Calu3 (cell line): ENCODE measurements at regions of chr17 and their contacts with region 1.

Region 1: GRCh38 chr17:39927101-39927928 is at the starts of genes LRRC3C and ORMDL3:
- DNase-seq: no peak
- H3K4me3 Mint-ChIP-seq: peak within 1 kb of the TSS; percentile 74
- H3K27ac Mint-ChIP-seq: peak within 1 kb of the TSS; percentile 66
- H3K4me1 Mint-ChIP-seq: peaks cover 60% of the 10 kb centered on the region
- H3K27me3 Mint-ChIP-seq: no peaks in the 10 kb centered on the region
- CTCF ChIP-seq: no peak
- total RNA-seq, gene LRRC3C: not detected in 2 replicates
- total RNA-seq, gene ORMDL3: 1,738 and 1,968 TPM in 2 replicates

Region 2: DNA sequence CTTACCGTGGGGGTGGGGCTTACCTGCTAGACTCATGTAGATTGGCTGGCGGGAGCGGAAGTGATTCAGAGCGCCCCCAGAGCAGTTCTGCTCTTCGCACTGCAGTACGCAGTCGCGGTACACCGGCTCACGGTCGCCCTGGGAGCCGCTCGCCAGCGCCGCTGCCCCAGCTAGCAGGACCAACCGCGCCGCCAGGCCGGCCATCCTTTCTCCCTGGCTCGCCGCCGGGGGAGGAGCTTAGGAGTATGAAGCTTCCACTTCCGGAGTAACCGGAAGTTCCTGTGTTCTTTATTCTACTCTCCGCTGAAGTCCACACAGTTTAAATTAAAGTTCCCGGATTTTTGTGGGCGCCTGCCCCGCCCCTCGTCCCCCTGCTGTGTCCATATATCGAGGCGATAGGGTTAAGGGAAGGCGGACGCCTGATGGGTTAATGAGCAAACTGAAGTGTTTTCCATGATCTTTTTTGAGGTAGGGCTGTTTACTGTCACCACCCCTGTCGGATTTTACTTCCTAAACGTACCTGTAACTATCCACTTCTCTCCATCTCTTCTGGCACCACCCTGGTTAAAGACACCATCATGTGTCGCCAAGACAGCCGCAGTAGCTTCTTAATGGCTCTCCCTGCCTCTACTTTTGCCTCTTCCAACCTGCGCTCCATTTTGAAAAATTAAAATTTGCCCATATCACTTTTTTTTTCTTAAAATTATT is 239.3 kb before region 1 on chr17 and contains the start of gene PGAP3:
- CTCF ChIA-PET with region 1: interaction called, 8,195 read pairs
- intact Hi-C with region 1: loop called (anchors 1 kb)
- DNase-seq: peak; percentile 100
- H3K4me3 Mint-ChIP-seq: peak within 1 kb of the TSS; percentile 64
- H3K27ac Mint-ChIP-seq: peak within 1 kb of the TSS; percentile 63
- H3K4me1 Mint-ChIP-seq: peaks cover 27% of the 10 kb centered on the region
- H3K27me3 Mint-ChIP-seq: no peaks in the 10 kb centered on the region
- CTCF ChIP-seq: no peak
- total RNA-seq, gene PGAP3: 1,186 and 1,276 TPM in 2 replicates

Region 3: GRCh38 chr17:39763046-39763820 is 164.1 kb before region 1 on chr17:
- CTCF ChIA-PET with region 1: interaction called, 32 read pairs
- intact Hi-C with region 1: no loop called
- DNase-seq: no peak
- H3K4me3 Mint-ChIP-seq: no peak overlapping the region
- H3K27ac Mint-ChIP-seq: no peak overlapping the region
- H3K4me1 Mint-ChIP-seq: peaks cover 12% of the 10 kb centered on the region
- H3K27me3 Mint-ChIP-seq: peaks cover 26% of the 10 kb centered on the region
- CTCF ChIP-seq: no peak

Region 4: GRCh38 chr17:39939588-39940419 is 12.5 kb after region 1 on chr17:
- CTCF ChIA-PET with region 1: interaction called, 6,506 read pairs
- intact Hi-C with region 1: no loop called
- DNase-seq: peak; percentile 76
- H3K4me3 Mint-ChIP-seq: no peak overlapping the region
- H3K27ac Mint-ChIP-seq: no peak overlapping the region
- H3K4me1 Mint-ChIP-seq: peaks cover 12% of the 10 kb centered on the region
- H3K27me3 Mint-ChIP-seq: peaks cover 63% of the 10 kb centered on the region
- CTCF ChIP-seq: no peak